ENCODE measurements at regions of chr1 and their contacts with region 1.

Region 1: GRCh38 chr1:55483523-55483922 is 268.4 kb upstream of the USP24 start:
- DNase-seq: no peak
- H3K4me3 ChIP-seq: no peak overlapping the region
- CTCF ChIP-seq: no peak
- POLR2A ChIP-seq: no peak

Region 2: DNA sequence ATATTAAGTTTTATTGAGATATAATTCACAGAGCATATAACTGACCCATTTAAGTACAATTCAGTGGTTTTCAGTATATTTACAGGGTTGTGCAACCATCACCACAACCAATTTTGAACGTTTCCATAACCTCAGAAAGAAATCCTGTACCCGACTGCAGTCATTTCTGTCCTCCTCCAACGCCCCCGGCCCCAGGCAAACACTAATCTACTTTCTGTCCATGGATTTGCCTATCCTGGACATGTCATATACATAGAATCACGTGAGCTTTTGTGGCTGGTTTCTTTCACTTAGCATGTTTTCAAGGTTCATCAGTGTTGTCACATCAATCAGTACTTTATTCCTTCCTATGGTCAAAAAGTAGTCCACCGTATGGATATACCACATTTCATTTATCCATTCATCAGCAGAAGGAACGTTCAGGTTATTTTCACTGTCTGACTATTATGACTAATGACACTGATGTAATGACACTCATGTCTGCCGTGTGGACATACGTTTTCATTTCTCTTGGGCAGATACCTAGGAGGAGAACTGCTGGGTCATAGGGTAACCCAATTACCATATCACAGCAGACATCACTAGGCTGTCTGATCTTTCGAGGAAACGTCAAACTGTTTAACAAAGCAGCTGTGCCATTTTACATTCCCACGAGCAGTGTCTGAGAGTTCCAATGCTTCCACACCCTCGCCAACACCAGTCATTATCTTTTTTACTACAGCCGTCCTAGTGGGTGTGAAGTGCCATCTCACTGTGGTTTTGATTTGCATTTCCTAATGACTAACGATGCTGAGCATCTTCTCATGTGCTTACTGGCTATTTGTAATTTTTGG is 1252.8 kb before region 1 on chr1:
- intact Hi-C with region 1: no loop called
- DNase-seq: no peak
- H3K4me3 ChIP-seq: no peak overlapping the region
- CTCF ChIP-seq: no peak
- POLR2A ChIP-seq: no peak

Region 3: GRCh38 chr1:54810100-54810942 is 673.2 kb before region 1 on chr1:
- intact Hi-C with region 1: no loop called
- DNase-seq: peak in 1 of 2 donors; percentile 87
- H3K4me3 ChIP-seq: no peak overlapping the region
- CTCF ChIP-seq: no peak
- POLR2A ChIP-seq: no peak

Region 4: GRCh38 chr1:55931081-55931940 is 447.8 kb after region 1 on chr1:
- intact Hi-C with region 1: loop called (anchors 2 kb)
- DNase-seq: no peak
- H3K4me3 ChIP-seq: no peak overlapping the region
- CTCF ChIP-seq: no peak
- POLR2A ChIP-seq: no peak